ENCODE measurements at regions of chr6 and their contacts with region 1.

Region 1: GRCh38 chr6:107674995-107675738 is 148.9 kb downstream of the SCML4 start:
- DNase-seq: peak; percentile 73
- H3K4me3 ChIP-seq: peak overlapping the region in 1 of 2 donors; percentile 7
- H3K27ac ChIP-seq: peak overlapping the region; percentile 48 to 66
- H3K4me1 ChIP-seq: no peaks in the 10 kb centered on the region
- H3K27me3 ChIP-seq: no peaks in the 10 kb centered on the region
- CTCF ChIP-seq: peak; percentile 37 to 91 (median 89)
- POLR2A ChIP-seq: no peak

Region 2: GRCh38 chr6:107466062-107466461 is 209.1 kb before region 1 on chr6:
- intact Hi-C with region 1: no loop called
- DNase-seq: no peak
- H3K4me3 ChIP-seq: no peak overlapping the region
- H3K27ac ChIP-seq: no peak overlapping the region
- H3K4me1 ChIP-seq: no peaks in the 10 kb centered on the region
- H3K27me3 ChIP-seq: no peaks in the 10 kb centered on the region
- CTCF ChIP-seq: no peak
- POLR2A ChIP-seq: no peak

Region 3: GRCh38 chr6:107634324-107635056 is 40.7 kb before region 1 on chr6:
- intact Hi-C with region 1: no loop called
- DNase-seq: no peak
- H3K4me3 ChIP-seq: no peak overlapping the region
- H3K27ac ChIP-seq: no peak overlapping the region
- H3K4me1 ChIP-seq: no peaks in the 10 kb centered on the region
- H3K27me3 ChIP-seq: no peaks in the 10 kb centered on the region
- CTCF ChIP-seq: no peak
- POLR2A ChIP-seq: no peak

Region 4: DNA sequence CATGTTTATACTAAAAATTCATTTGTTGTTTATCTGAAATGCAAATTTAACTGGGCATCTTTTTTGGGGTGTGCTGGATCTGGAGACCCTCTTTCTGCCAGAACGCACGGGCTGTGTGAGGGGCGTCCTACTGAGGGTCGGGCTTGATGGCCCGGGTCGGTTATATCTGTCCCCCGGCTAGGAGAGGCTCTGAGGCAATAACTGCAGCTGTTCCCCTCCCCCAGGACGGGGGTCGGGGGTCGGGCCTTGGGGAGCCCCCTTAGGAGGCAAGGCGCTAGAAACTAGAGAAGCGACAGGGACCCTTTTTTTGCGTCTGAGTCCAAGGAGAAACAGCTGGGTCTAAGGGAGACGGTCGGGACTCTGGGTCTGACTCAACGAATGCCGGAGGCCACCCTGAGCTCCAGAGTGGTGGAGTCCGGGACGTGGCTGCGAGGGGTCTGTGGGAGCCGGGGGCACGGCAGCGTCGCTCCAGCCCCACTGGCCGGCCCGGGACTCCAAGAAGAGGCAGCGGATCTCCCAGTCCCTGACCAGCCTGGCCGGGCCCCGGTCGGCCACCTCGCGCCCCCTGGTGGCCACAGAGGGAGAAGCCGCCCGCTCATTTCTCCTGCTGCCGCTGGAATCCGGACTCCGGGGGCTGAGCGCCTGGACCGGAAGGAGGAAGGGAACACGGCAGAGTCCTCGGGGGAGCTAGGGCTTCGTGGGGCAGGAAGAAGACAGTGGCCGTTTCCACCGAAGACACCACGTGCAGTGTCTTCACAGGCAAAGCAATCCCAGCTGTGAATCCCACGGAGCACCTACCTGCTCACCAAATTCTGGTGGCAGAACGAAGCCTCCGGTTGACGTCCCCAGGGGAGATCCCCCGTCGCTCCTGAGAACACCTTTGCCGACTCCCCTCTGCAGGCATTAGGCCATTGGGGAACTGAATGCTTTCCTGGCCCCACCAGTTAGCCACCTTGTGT is 173.0 kb after region 1 on chr6:
- intact Hi-C with region 1: loop called (anchors 5 kb)
- DNase-seq: peak; percentile 73
- H3K4me3 ChIP-seq: peak overlapping the region; percentile 22 to 34
- H3K27ac ChIP-seq: no peak overlapping the region
- H3K4me1 ChIP-seq: no peaks in the 10 kb centered on the region
- H3K27me3 ChIP-seq: no peaks in the 10 kb centered on the region
- CTCF ChIP-seq: peak; percentile 90 to 96 (median 94)
- POLR2A ChIP-seq: no peak

Region 5: GRCh38 chr6:108113557-108114519 is 438.7 kb after region 1 on chr6:
- intact Hi-C with region 1: no loop called
- DNase-seq: no peak
- H3K4me3 ChIP-seq: no peak overlapping the region
- H3K27ac ChIP-seq: no peak overlapping the region
- H3K4me1 ChIP-seq: peaks cover 2% of the 10 kb centered on the region
- H3K27me3 ChIP-seq: peaks cover 12% of the 10 kb centered on the region
- CTCF ChIP-seq: peak; percentile 25 to 68 (median 64)
- POLR2A ChIP-seq: no peak

Measured in prostate gland (tissue), 2 donors.